Calu3 (cell line): ENCODE measurements at regions of chr9 and their contacts with region 1.

Region 1: GRCh38 chr9:137227063-137227852 is at the start of gene RNF224:
- DNase-seq: peak; percentile 92
- H3K4me3 Mint-ChIP-seq: peak within 1 kb of the TSS; percentile 72
- H3K27ac Mint-ChIP-seq: peak within 1 kb of the TSS; percentile 95
- H3K4me1 Mint-ChIP-seq: peaks cover 19% of the 10 kb centered on the region
- H3K27me3 Mint-ChIP-seq: no peaks in the 10 kb centered on the region
- CTCF ChIP-seq: peak; percentile 77
- total RNA-seq, gene RNF224: 1.6 and 1.7 TPM in 2 replicates

Region 2: GRCh38 chr9:136564379-136564988 is 662.8 kb before region 1 on chr9:
- CTCF ChIA-PET with region 1: no interaction called
- intact Hi-C with region 1: no loop called
- DNase-seq: no peak
- H3K4me3 Mint-ChIP-seq: no peak overlapping the region
- H3K27ac Mint-ChIP-seq: no peak overlapping the region
- H3K4me1 Mint-ChIP-seq: peaks cover 12% of the 10 kb centered on the region
- H3K27me3 Mint-ChIP-seq: no peaks in the 10 kb centered on the region
- CTCF ChIP-seq: no peak

Region 3: DNA sequence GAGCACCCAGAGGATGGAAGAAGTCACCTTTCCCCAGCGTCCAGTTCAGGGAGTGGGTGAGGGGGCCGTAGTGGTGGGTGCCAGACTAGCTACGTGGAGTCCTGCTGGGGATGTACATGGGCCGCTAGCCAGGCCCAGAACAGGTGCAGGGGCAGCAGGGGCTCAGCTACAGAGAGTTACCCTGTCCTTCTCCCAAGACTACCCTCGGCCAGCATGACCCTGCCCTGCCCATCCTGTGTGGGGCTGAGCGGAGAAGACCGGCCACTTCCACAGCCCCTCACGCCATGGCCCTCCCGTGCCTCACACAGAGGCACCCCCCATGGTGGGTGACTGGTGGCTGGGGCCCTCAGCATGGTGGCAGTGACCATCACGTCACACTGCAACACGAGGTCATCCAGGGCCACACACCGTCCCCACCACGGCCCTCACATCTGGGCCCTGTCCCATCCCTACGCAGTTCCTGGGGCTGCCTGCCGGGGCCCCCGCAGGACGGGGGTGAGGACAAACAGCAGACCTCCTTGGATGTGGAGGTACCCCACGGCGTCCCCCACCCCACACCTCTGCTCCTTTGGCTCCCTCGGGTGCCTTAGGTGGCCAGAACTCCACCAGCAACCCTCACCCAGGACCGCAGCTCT is 111.7 kb before region 1 on chr9:
- CTCF ChIA-PET with region 1: interaction called, 7 read pairs
- intact Hi-C with region 1: loop called (anchors 2 kb)
- DNase-seq: no peak
- H3K4me3 Mint-ChIP-seq: no peak overlapping the region
- H3K27ac Mint-ChIP-seq: no peak overlapping the region
- H3K4me1 Mint-ChIP-seq: no peaks in the 10 kb centered on the region
- H3K27me3 Mint-ChIP-seq: peaks cover 14% of the 10 kb centered on the region
- CTCF ChIP-seq: no peak

Region 4: GRCh38 chr9:137176302-137177182 is 50.7 kb before region 1 on chr9:
- CTCF ChIA-PET with region 1: interaction called, 8 read pairs
- intact Hi-C with region 1: loop called (anchors 5 kb)
- DNase-seq: peak; percentile 51
- H3K4me3 Mint-ChIP-seq: no peak overlapping the region
- H3K27ac Mint-ChIP-seq: no peak overlapping the region
- H3K4me1 Mint-ChIP-seq: peaks cover 9% of the 10 kb centered on the region
- H3K27me3 Mint-ChIP-seq: peaks cover 11% of the 10 kb centered on the region
- CTCF ChIP-seq: no peak

Region 5: GRCh38 chr9:137188490-137189296 is 38.6 kb before region 1 on chr9 and contains the starts of genes ANAPC2 and SSNA1:
- CTCF ChIA-PET with region 1: interaction called, 11 read pairs
- intact Hi-C with region 1: no loop called
- DNase-seq: peak; percentile 92
- H3K4me3 Mint-ChIP-seq: peak within 1 kb of the TSS; percentile 98
- H3K27ac Mint-ChIP-seq: peak within 1 kb of the TSS; percentile 91
- H3K4me1 Mint-ChIP-seq: peaks cover 10% of the 10 kb centered on the region
- H3K27me3 Mint-ChIP-seq: no peaks in the 10 kb centered on the region
- CTCF ChIP-seq: no peak
- total RNA-seq, gene ANAPC2: 49.4 and 51.4 TPM in 2 replicates
- total RNA-seq, gene SSNA1: 41.9 and 44.1 TPM in 2 replicates

Region 6: DNA sequence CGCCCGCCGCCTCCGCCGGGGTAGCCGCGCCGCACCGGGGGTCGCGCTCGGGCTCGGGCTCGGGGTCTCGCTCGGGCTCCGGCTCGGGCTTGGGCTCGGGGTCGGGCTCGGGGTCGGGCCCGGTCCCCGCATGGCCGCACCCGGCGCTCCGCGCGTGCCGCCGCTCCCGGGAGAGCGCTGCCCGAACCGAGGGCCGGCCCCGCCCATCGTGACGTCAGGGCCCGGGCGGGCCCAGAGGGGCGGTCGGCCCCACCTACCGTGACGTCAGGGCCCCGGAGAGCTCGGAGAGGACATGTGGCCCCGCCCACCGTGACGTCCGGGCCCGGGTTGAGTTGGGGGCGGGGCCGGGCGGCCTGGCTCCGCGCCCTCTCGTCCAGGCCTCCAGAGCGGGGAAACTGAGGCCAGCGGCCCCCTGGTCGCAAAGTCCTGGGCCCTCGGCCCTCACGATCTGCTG is 231.9 kb after region 1 on chr9 and contains the start of gene NSMF:
- CTCF ChIA-PET with region 1: no interaction called
- intact Hi-C with region 1: no loop called
- DNase-seq: peak; percentile 95
- H3K4me3 Mint-ChIP-seq: peak within 1 kb of the TSS; percentile 45
- H3K27ac Mint-ChIP-seq: no peak within 1 kb of the TSS
- H3K4me1 Mint-ChIP-seq: no peaks in the 10 kb centered on the region
- H3K27me3 Mint-ChIP-seq: no peaks in the 10 kb centered on the region
- CTCF ChIP-seq: no peak
- total RNA-seq, gene NSMF: 31.6 and 38.3 TPM in 2 replicates